CD4-positive, alpha-beta T cell (primary cell): ENCODE measurements at regions of chr4 and their contacts with region 1.

Region 1: GRCh38 chr4:152535903-152536544 is at the start of gene FBXW7:
- DNase-seq: peak; percentile 98 to 100 (median 99)
- ATAC-seq: peak; percentile 79
- H3K4me3 ChIP-seq: peak within 1 kb of the TSS; percentile 84
- H3K4me3 Mint-ChIP-seq: peak within 1 kb of the TSS; percentile 97
- H3K27ac ChIP-seq: peak within 1 kb of the TSS; percentile 90 to 98
- H3K27ac Mint-ChIP-seq: peak within 1 kb of the TSS; percentile 94
- H3K4me1 ChIP-seq: peaks cover 36% of the 10 kb centered on the region
- H3K4me1 Mint-ChIP-seq: peaks cover 66% of the 10 kb centered on the region
- H3K27me3 ChIP-seq: no peaks in the 10 kb centered on the region
- H3K27me3 Mint-ChIP-seq: no peaks in the 10 kb centered on the region
- CTCF ChIP-seq: no peak
- total RNA-seq, gene FBXW7: 128 to 140 TPM

Region 2: DNA sequence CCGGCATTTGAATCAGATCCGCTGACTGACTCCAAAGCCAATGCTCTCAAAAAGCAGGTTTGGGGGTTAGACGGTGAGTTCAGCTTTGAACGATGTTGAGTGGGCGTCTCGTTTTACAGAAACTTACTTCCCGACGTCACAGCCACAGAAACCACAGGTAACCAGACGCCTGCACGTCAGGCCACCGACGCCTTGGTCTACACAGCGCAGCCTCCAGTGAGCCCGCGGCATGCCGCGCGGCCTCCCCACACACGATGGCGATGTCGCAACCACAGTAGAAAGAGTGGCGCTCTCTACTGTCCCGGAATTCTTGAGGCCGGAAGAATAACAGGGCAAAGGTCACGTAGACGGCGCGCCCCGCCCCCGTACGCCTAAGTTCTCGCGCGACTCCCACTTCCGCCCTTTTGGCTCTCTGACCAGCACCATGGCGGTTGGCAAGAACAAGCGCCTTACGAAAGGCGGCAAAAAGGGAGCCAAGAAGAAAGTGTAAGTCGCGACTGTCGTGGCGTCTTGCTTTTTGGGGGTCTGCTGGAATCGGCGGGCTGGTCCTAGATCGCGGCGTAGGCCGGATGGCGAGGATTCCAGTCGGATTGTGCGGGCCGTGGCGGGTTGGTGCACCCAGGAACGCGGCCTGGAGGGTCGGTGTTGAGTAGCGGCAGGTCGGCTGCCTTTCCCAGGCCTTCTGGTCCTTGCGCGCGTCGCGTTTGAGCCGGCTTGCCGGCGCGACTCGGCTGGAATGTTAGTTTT is 1436.6 kb before region 1 on chr4 and contains the start of gene RPS3A:
- CTCF ChIA-PET with region 1: no interaction called
- POLR2A ChIA-PET with region 1: interaction called, 13 read pairs
- intact Hi-C with region 1: loop called (anchors 1 to 2 kb)
- DNase-seq: peak; percentile 96 to 99 (median 98)
- ATAC-seq: peak; percentile 83
- H3K4me3 ChIP-seq: peak within 1 kb of the TSS; percentile 74
- H3K4me3 Mint-ChIP-seq: peak within 1 kb of the TSS; percentile 87
- H3K27ac ChIP-seq: peak within 1 kb of the TSS; percentile 82 to 97
- H3K27ac Mint-ChIP-seq: peak within 1 kb of the TSS; percentile 88
- H3K4me1 ChIP-seq: peaks cover 26% of the 10 kb centered on the region
- H3K4me1 Mint-ChIP-seq: peaks cover 36% of the 10 kb centered on the region
- H3K27me3 ChIP-seq: no peaks in the 10 kb centered on the region
- H3K27me3 Mint-ChIP-seq: no peaks in the 10 kb centered on the region
- CTCF ChIP-seq: peak; percentile 91
- total RNA-seq, gene RPS3A: 3,925 to 4,071 TPM

Region 3: DNA sequence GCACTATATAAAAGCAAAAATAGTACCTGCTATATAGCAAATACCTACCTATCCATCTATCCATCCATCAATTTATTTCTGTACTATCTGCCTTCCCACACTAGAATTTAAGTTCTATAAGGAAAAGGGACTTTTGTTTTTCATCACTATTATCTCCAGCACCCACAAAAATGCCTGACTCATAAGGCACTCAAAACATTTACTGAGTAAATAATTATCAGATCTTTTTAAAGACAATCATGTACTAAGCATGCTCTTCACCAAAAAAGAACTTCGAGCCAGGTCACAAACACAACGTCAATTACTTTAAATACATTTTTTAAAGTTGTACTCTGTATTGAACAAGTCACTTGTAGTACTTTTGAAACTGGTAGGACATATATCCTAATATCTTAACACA is 120.0 kb before region 1 on chr4:
- CTCF ChIA-PET with region 1: no interaction called
- POLR2A ChIA-PET with region 1: no interaction called
- intact Hi-C with region 1: no loop called
- DNase-seq: no peak
- ATAC-seq: no peak
- H3K4me3 ChIP-seq: no peak overlapping the region
- H3K4me3 Mint-ChIP-seq: no peak overlapping the region
- H3K27ac ChIP-seq: no peak overlapping the region
- H3K27ac Mint-ChIP-seq: no peak overlapping the region
- H3K4me1 ChIP-seq: no peaks in the 10 kb centered on the region
- H3K4me1 Mint-ChIP-seq: peaks cover 51% of the 10 kb centered on the region
- H3K27me3 ChIP-seq: no peaks in the 10 kb centered on the region
- H3K27me3 Mint-ChIP-seq: no peaks in the 10 kb centered on the region
- CTCF ChIP-seq: no peak

Region 4: GRCh38 chr4:152460488-152460887 is 75.5 kb before region 1 on chr4:
- CTCF ChIA-PET with region 1: no interaction called
- POLR2A ChIA-PET with region 1: interaction called, 5 read pairs
- intact Hi-C with region 1: loop called in 1 of 2 experiments (anchors 5 kb)
- DNase-seq: peak in 2 of 14 experiments; percentile 13 to 24
- ATAC-seq: no peak
- H3K4me3 ChIP-seq: no peak overlapping the region
- H3K4me3 Mint-ChIP-seq: no peak overlapping the region
- H3K27ac ChIP-seq: no peak overlapping the region
- H3K27ac Mint-ChIP-seq: no peak overlapping the region
- H3K4me1 ChIP-seq: peaks cover 7% of the 10 kb centered on the region
- H3K4me1 Mint-ChIP-seq: peaks cover 81% of the 10 kb centered on the region
- H3K27me3 ChIP-seq: no peaks in the 10 kb centered on the region
- H3K27me3 Mint-ChIP-seq: no peaks in the 10 kb centered on the region
- CTCF ChIP-seq: no peak

Region 5: DNA sequence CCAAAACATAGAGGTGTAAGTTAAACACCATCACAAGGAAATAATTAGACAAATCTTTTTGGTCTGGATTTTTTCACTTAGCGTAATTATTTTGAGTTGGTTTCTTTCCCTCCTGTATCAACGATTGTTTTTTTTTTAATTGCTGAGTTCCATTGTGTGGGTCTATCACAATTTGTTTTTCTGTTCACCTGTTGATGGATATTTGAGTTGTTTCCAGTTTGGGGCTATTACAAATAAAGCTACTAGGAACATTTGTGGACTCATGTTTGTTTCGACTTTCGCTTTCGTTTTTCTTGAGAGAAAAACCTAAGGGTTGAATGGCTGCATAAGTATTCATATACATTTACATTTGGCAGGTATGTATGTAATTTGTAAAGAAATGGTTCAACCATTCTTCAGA is 20.3 kb after region 1 on chr4:
- CTCF ChIA-PET with region 1: interaction called, 5 read pairs
- POLR2A ChIA-PET with region 1: interaction called, 147 read pairs
- intact Hi-C with region 1: loop called in 1 of 2 experiments (anchors 1 kb)
- DNase-seq: peak in 3 of 14 experiments; percentile 29 to 62 (median 29)
- ATAC-seq: no peak
- H3K4me3 ChIP-seq: peak overlapping the region; percentile 6
- H3K4me3 Mint-ChIP-seq: peak overlapping the region; percentile 48
- H3K27ac ChIP-seq: no peak overlapping the region
- H3K27ac Mint-ChIP-seq: peak overlapping the region; percentile 77
- H3K4me1 ChIP-seq: peaks cover 32% of the 10 kb centered on the region
- H3K4me1 Mint-ChIP-seq: peaks cover 44% of the 10 kb centered on the region
- H3K27me3 ChIP-seq: no peaks in the 10 kb centered on the region
- H3K27me3 Mint-ChIP-seq: no peaks in the 10 kb centered on the region
- CTCF ChIP-seq: no peak

Region 6: GRCh38 chr4:152605641-152606335 is 69.8 kb after region 1 on chr4:
- CTCF ChIA-PET with region 1: no interaction called
- POLR2A ChIA-PET with region 1: interaction called, 11 read pairs
- intact Hi-C with region 1: no loop called
- DNase-seq: no peak
- ATAC-seq: no peak
- H3K4me3 ChIP-seq: no peak overlapping the region
- H3K4me3 Mint-ChIP-seq: no peak overlapping the region
- H3K27ac ChIP-seq: no peak overlapping the region
- H3K27ac Mint-ChIP-seq: no peak overlapping the region
- H3K4me1 ChIP-seq: peaks cover 8% of the 10 kb centered on the region
- H3K4me1 Mint-ChIP-seq: peaks cover 14% of the 10 kb centered on the region
- H3K27me3 ChIP-seq: no peaks in the 10 kb centered on the region
- H3K27me3 Mint-ChIP-seq: no peaks in the 10 kb centered on the region
- CTCF ChIP-seq: no peak

Region 7: GRCh38 chr4:152679414-152680281 is 143.6 kb after region 1 on chr4 and contains the start of gene TMEM154:
- CTCF ChIA-PET with region 1: interaction called, 4 read pairs
- POLR2A ChIA-PET with region 1: interaction called, 44 read pairs
- intact Hi-C with region 1: loop called in 1 of 2 experiments (anchors 5 kb)
- DNase-seq: peak; percentile 48 to 90 (median 67)
- ATAC-seq: peak; percentile 98
- H3K4me3 ChIP-seq: peak within 1 kb of the TSS; percentile 88
- H3K4me3 Mint-ChIP-seq: peak within 1 kb of the TSS; percentile 97
- H3K27ac ChIP-seq: peak within 1 kb of the TSS; percentile 66 to 73
- H3K27ac Mint-ChIP-seq: peak within 1 kb of the TSS; percentile 98
- H3K4me1 ChIP-seq: peaks cover 31% of the 10 kb centered on the region
- H3K4me1 Mint-ChIP-seq: peaks cover 52% of the 10 kb centered on the region
- H3K27me3 ChIP-seq: no peaks in the 10 kb centered on the region
- H3K27me3 Mint-ChIP-seq: no peaks in the 10 kb centered on the region
- CTCF ChIP-seq: no peak
- total RNA-seq, gene TMEM154: 13.6 to 16.7 TPM